ENCODE measurements at regions of chr20 and their contacts with region 1.

Region 1: GRCh38 chr20:33401184-33401920 is at the start of gene CDK5RAP1:
- DNase-seq: peak; percentile 92
- H3K4me3 ChIP-seq: peak within 1 kb of the TSS; percentile 80 to 99 (median 95)
- H3K27ac ChIP-seq: peak within 1 kb of the TSS; percentile 73 to 78 (median 76)
- H3K4me1 ChIP-seq: peaks cover 0 to 37% (median 26%) of the 10 kb centered on the region in 4 donors
- H3K27me3 ChIP-seq: no peaks in the 10 kb centered on the region
- CTCF ChIP-seq: no peak
- EP300 ChIP-seq: no peak
- POLR2A ChIP-seq: peak in 1 of 2 donors; percentile 12
- total RNA-seq, gene CDK5RAP1: 18.4 to 21.3 (median 20.1) TPM

Region 2: GRCh38 chr20:33443512-33444239 is 42.3 kb after region 1 on chr20 and contains the start of gene SNTA1:
- intact Hi-C with region 1: loop called (anchors 5 kb)
- DNase-seq: peak; percentile 96
- H3K4me3 ChIP-seq: peak within 1 kb of the TSS; percentile 53 to 86 (median 84)
- H3K27ac ChIP-seq: peak within 1 kb of the TSS; percentile 83 to 91 (median 86)
- H3K4me1 ChIP-seq: peaks cover 0 to 25% (median 14%) of the 10 kb centered on the region in 4 donors
- H3K27me3 ChIP-seq: no peaks in the 10 kb centered on the region
- CTCF ChIP-seq: no peak
- EP300 ChIP-seq: no peak
- POLR2A ChIP-seq: no peak
- total RNA-seq, gene SNTA1: 29.3 to 42.7 (median 33.4) TPM

Measured in sigmoid colon (tissue), 7 donors.